ENCODE measurements at regions of chr12 and their contacts with region 1.

Region 1: DNA sequence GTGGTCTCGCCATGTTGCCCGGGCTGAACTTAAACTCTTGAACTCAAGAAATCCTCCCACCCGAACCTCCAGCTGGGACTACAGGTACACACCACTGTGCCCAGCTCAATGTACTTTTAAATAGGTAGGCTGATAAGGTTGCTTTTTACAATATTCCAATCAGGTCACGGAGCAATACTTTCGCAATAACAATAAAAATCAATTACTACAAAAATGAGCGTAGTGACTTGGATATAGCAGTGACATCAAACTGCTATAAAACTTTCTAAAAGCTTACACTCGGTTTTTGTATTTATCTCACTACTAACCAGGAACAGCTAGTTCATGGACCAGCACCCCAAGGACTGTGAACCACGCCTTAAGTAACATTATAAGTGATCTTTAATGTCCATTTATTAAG is 10.5 kb downstream of the SARNP start:
- DNase-seq: no peak
- ATAC-seq: no peak
- H3K4me3 ChIP-seq: no peak overlapping the region
- H3K27ac ChIP-seq: no peak overlapping the region
- H3K4me1 ChIP-seq: peaks cover 0 to 1% (median 0%) of the 10 kb centered on the region in 3 donors
- H3K27me3 ChIP-seq: no peaks in the 10 kb centered on the region
- CTCF ChIP-seq: no peak

Region 2: GRCh38 chr12:55757701-55758100 is 49.3 kb before region 1 on chr12:
- intact Hi-C with region 1: loop called in 1 of 3 experiments (anchors 10 kb)
- DNase-seq: no peak
- ATAC-seq: no peak
- H3K4me3 ChIP-seq: no peak overlapping the region
- H3K27ac ChIP-seq: no peak overlapping the region
- H3K4me1 ChIP-seq: no peaks in the 10 kb centered on the region
- H3K27me3 ChIP-seq: no peaks in the 10 kb centered on the region
- CTCF ChIP-seq: no peak

Region 3: DNA sequence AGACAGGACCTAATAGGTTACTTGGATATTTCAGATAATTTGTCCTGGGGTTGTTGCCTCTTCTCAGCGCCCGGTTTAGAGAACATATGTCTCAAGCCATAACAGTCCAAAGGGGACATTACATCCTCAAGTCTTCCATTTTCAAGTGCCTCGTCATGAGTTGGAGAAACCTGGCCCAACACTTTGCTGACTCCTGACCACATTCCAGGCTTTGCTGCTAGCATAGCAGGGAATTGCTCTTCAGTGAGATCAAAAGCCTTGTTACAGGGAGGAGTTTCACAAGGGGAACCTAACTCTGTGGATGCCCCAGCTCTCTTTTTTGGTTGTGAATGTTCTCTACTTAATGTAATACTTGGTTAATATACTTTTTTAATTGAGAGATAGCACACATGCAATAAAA is 43.9 kb after region 1 on chr12:
- intact Hi-C with region 1: no loop called
- DNase-seq: no peak
- ATAC-seq: no peak
- H3K4me3 ChIP-seq: no peak overlapping the region
- H3K27ac ChIP-seq: no peak overlapping the region
- H3K4me1 ChIP-seq: no peaks in the 10 kb centered on the region
- H3K27me3 ChIP-seq: no peaks in the 10 kb centered on the region
- CTCF ChIP-seq: no peak